Right cardiac atrium (tissue), 5 donors: ENCODE measurements at regions of chr1 and their contacts with region 1.

Region 1: GRCh38 chr1:113904674-113905434 is at the starts of genes AP4B1 and DCLRE1B:
- DNase-seq: peak; percentile 100
- ATAC-seq: peak; percentile 98 to 99
- H3K4me3 ChIP-seq: peak within 1 kb of the TSS; percentile 53
- H3K27ac ChIP-seq: peak within 1 kb of the TSS; percentile 87
- H3K4me1 ChIP-seq: no peaks in the 10 kb centered on the region
- H3K27me3 ChIP-seq: no peaks in the 10 kb centered on the region
- total RNA-seq, gene AP4B1: 11.0 to 16.7 (median 15.8) TPM
- total RNA-seq, gene DCLRE1B: 2.3 to 3.4 (median 2.6) TPM

Region 2: DNA sequence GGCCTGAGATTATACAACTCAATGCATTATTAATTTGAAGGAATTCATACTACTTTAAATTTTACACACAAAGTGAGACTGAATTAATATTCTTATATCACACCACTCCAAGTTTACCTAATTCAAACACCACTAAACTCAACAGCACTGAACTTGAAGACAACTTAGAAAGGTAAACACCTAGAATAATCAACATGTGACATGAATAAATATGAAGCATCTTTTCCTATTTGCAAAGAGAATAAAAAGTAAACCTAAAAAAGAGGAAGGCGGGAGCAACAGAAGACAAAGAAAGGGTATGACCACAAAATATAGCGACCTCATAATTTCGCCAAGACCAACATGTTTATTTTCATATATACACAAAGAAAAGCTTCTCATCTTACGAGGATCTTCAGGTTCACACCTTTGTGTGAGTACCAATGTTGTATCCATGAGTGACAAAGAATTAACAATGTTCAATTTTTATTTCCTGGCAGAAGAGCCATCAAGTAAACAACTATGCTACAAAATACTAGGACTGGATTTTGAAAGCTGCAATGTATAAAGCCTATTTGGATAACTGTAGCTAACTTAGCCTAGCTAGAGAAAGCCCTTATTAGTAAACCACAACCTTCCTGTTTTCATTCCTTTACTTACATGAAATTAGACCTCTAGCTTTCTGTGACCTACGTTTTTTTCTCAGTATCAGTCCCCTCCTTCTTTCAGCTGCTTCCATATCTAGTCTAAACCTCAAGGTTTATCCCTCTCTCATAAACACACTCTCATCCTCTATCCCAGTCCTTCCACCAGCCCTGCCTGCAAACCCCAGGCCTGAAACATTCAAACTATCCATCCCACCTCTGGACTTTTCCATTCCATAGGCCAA is 124.3 kb before region 1 on chr1:
- intact Hi-C with region 1: no loop called
- DNase-seq: no peak
- ATAC-seq: no peak
- H3K4me3 ChIP-seq: no peak overlapping the region
- H3K27ac ChIP-seq: no peak overlapping the region
- H3K4me1 ChIP-seq: peaks cover 5% of the 10 kb centered on the region
- H3K27me3 ChIP-seq: no peaks in the 10 kb centered on the region

Region 3: GRCh38 chr1:113793878-113794834 is 110.7 kb before region 1 on chr1:
- intact Hi-C with region 1: no loop called
- DNase-seq: no peak
- ATAC-seq: peak; percentile 55 to 78
- H3K4me3 ChIP-seq: no peak overlapping the region
- H3K27ac ChIP-seq: no peak overlapping the region
- H3K4me1 ChIP-seq: peaks cover 5% of the 10 kb centered on the region
- H3K27me3 ChIP-seq: no peaks in the 10 kb centered on the region

Region 4: GRCh38 chr1:113835642-113836307 is 69.1 kb before region 1 on chr1:
- intact Hi-C with region 1: loop called in 2 of 4 experiments (anchors 10 kb)
- DNase-seq: no peak
- ATAC-seq: no peak
- H3K4me3 ChIP-seq: no peak overlapping the region
- H3K27ac ChIP-seq: no peak overlapping the region
- H3K4me1 ChIP-seq: no peaks in the 10 kb centered on the region
- H3K27me3 ChIP-seq: no peaks in the 10 kb centered on the region

Region 5: DNA sequence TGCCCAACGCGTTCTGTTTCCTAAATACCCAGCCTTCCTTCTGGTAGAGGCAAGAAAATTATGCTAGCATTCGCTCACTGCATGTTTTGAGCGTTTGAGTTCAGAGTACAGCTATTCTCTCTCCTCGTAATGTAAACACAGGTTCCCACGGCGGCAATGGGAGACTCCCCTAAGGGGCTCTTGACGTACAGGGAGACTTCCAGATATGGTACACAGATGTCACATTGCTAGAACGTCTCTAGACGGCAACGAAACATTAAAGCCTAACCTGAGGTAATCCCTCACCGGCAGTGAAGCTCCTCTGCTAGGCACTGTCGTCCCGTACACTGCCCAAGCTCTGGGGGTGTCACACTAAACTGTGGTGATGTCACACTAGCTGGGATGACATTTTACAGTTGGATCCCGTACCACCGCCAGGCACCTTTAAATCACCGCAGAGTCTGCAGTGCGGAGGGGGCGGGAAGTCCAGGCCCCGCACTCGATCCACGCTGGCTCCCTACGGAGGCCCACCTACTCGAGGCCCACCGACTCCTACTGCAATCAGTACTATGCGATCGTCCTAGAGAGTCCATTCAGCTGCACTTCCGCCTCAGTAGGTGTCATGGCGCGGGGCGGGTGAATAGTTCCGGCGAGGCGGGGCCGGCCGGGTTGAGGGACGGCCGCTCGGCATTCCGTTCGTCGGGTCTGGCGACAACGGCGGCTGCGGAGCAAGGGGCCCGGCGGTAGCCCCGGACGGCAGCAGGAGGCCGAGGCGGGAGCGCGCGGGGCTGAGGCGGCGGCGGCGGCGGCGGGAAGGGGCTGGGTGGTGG is 24.3 kb after region 1 on chr1 and contains the start of gene HIPK1:
- intact Hi-C with region 1: loop called in 2 of 4 experiments (anchors 2 kb)
- DNase-seq: peak; percentile 94 to 97 (median 97)
- ATAC-seq: peak; percentile 95
- H3K4me3 ChIP-seq: peak within 1 kb of the TSS; percentile 76
- H3K27ac ChIP-seq: peak within 1 kb of the TSS; percentile 96
- H3K4me1 ChIP-seq: peaks cover 3% of the 10 kb centered on the region
- H3K27me3 ChIP-seq: no peaks in the 10 kb centered on the region
- total RNA-seq, gene HIPK1: 56.1 to 98.7 (median 62.8) TPM